Activated naive CD4-positive, alpha-beta T cell treated with anti-CD3 and anti-CD28 coated beads for 36 hours (primary cell): ENCODE measurements at regions of chr18 and their contacts with region 1.

Region 1: GRCh38 chr18:47260120-47260923 is 8.9 kb upstream of the SKOR2 start:
- DNase-seq: peak; percentile 65
- H3K4me3 Mint-ChIP-seq: no peak overlapping the region
- H3K27ac Mint-ChIP-seq: no peak overlapping the region
- H3K4me1 Mint-ChIP-seq: peaks cover 7% of the 10 kb centered on the region
- H3K27me3 Mint-ChIP-seq: peaks cover 81% of the 10 kb centered on the region

Region 2: GRCh38 chr18:47756364-47757016 is 496.2 kb after region 1 on chr18:
- CTCF ChIA-PET with region 1: interaction called, 3 read pairs
- intact Hi-C with region 1: loop called (anchors 10 kb)
- DNase-seq: peak; percentile 65
- H3K4me3 Mint-ChIP-seq: no peak overlapping the region
- H3K27ac Mint-ChIP-seq: no peak overlapping the region
- H3K4me1 Mint-ChIP-seq: no peaks in the 10 kb centered on the region
- H3K27me3 Mint-ChIP-seq: peaks cover 24% of the 10 kb centered on the region

Region 3: GRCh38 chr18:48326901-48327675 is 1066.8 kb after region 1 on chr18:
- CTCF ChIA-PET with region 1: no interaction called
- intact Hi-C with region 1: no loop called
- DNase-seq: no peak
- H3K4me3 Mint-ChIP-seq: no peak overlapping the region
- H3K27ac Mint-ChIP-seq: no peak overlapping the region
- H3K4me1 Mint-ChIP-seq: peaks cover 5% of the 10 kb centered on the region
- H3K27me3 Mint-ChIP-seq: peaks cover 5% of the 10 kb centered on the region